ENCODE measurements at regions of chr19 and their contacts with region 1.

Region 1: GRCh38 chr19:8654591-8655339 is 24.3 kb downstream of the NFILZ start:
- DNase-seq: peak in 9 of 10 donors; percentile 21 to 90 (median 55)

Region 2: GRCh38 chr19:8684001-8684902 is 29.5 kb after region 1 on chr19:
- intact Hi-C with region 1: no loop called
- DNase-seq: peak in 1 of 10 donors; percentile 72

Region 3: DNA sequence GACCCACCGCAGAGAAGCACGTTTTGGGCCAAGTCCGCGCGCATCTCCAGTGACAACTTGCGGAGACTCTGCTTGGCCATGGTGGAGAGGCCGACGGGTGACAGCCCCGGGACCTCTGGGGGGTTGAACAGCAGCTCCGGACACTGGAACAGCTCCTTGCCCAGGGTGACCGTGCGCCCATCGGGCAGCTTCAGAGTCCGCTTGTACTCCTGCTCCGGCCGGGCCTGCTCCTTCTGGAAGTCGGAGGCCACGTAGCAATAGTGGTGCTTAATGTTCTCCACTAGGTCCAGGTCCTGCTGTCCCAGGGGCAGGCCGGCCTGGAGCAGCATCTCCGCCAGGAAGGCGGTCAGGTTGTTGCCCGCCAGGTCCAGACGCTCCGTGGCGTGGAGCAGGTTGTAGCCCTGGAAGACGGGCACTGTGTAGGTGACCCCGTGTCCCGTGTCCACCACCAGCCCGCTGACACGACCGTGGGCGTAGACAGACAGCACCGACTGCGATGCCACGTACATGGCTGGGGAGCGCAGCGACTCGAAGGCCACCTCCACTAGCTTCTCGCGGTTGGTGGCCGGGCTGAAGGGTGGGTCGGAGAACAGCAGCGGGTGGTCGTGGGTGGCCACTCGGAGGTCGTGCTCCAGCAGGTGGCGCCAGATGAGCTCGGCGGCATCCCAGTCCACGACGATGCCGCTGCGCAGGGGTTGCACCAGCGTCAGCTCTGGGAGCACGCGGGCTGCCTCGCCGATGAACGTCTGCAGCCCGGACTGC is 43.1 kb after region 1 on chr19:
- intact Hi-C with region 1: loop called (anchors 5 kb)
- DNase-seq: peak in 1 of 10 donors; percentile 33

Region 4: DNA sequence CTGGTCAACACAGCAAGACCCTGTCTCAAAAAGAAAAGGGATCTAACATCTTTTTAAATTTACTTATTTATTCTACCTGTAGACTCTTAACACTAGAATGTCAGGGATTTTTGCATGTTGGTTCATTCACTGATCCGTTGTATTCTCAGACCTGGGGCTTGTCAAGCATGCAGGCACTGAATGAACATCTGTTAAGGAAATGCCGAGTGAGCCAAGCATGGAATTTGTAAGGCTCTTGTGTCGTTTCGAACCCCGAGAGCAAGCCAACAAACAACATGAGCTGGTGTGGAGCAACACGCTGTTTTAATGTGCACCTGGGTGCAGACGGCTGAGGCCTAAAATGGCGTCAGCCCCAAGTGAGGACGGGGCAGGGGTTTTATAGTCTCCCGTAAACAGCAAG is 422.1 kb after region 1 on chr19:
- intact Hi-C with region 1: loop called (anchors 2 kb)
- DNase-seq: no peak